Spleen (tissue), 13 donors: ENCODE measurements at regions of chr2 and their contacts with region 1.

Region 1: GRCh38 chr2:209977386-209978239 is 24.8 kb upstream of the RPE start:
- DNase-seq: no peak
- H3K4me3 ChIP-seq: no peak overlapping the region
- H3K27ac ChIP-seq: no peak overlapping the region
- H3K4me1 ChIP-seq: no peaks in the 10 kb centered on the region
- H3K27me3 ChIP-seq: peaks cover 0 to 5% (median 0%) of the 10 kb centered on the region in 7 donors
- CTCF ChIP-seq: peak; percentile 35 to 70 (median 62)
- POLR2A ChIP-seq: no peak

Region 2: GRCh38 chr2:210189452-210190143 is 212.0 kb after region 1 on chr2:
- intact Hi-C with region 1: loop called (anchors 5 kb)
- DNase-seq: no peak
- H3K4me3 ChIP-seq: no peak overlapping the region
- H3K27ac ChIP-seq: no peak overlapping the region
- H3K4me1 ChIP-seq: no peaks in the 10 kb centered on the region
- H3K27me3 ChIP-seq: no peaks in the 10 kb centered on the region
- CTCF ChIP-seq: no peak
- POLR2A ChIP-seq: no peak